ENCODE measurements at regions of chr2 and their contacts with region 1.

Region 1: DNA sequence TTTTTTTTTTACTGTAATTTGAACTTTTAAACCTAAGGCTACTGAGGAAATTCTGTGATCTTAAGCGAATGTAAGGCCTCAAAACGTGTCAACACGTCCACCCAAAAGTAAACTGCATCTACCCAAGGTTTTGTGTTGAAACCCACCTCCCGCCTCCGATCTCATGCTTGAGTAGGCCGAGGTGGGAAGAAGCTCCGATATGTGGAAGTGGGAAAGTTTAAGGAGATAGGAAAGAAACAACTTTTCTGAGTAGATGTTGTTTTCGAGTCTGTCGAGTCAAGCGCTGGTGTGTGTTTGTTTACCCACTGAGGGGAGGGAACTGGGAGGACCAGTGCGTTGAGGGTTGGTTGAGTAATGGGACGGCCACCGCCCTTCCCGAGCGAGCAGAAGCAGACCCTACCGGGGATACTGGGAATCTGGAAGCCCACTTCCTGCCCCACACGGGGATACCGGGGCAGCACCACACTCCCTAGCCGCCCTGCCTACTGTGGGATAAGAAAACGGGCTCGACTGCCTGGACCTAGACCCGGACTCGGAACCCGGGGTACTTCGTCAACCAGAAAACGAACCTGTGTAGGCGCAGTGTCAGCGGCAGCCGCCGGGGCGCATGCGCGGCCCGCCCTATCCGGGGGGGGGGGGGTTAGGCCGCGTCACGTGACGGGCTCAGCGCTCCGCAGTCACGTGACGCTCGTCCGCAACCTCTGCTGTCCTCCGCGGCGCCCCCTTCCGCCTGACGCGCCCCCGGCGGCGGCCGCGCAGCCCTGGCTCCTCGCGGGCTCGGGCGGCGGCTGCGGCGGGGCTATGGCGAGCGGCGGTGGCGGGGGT is at the start of gene RETREG2:
- DNase-seq: peak; percentile 88
- ATAC-seq: peak; percentile 43
- H3K4me3 Mint-ChIP-seq: peak within 1 kb of the TSS; percentile 97
- H3K27ac Mint-ChIP-seq: peak within 1 kb of the TSS; percentile 93
- H3K4me1 Mint-ChIP-seq: peaks cover 60% of the 10 kb centered on the region
- H3K27me3 Mint-ChIP-seq: no peaks in the 10 kb centered on the region
- total RNA-seq, gene RETREG2: 129 TPM

Region 2: DNA sequence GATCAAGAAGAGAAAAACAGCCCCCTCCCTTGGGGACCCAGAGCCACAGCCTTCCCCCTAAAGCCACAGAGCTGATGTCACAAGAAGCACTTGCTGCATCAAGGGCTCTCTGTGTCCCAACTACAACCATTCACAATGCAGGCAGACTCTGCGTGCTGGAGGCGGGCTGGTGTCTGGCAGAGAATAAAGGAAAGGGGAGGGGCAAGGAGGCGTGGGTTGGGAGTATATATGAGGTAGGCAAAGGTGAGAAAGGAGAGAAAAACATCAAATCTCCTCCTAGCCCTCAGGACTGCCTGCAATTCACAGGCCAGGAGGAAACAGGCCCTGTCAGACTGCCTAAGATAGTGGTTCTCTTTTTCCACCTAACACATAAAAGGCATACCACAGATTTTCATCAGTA is 68.3 kb before region 1 on chr2:
- POLR2A ChIA-PET with region 1: no interaction called
- DNase-seq: no peak
- ATAC-seq: peak; percentile 83
- H3K4me3 Mint-ChIP-seq: no peak overlapping the region
- H3K27ac Mint-ChIP-seq: no peak overlapping the region
- H3K4me1 Mint-ChIP-seq: peaks cover 17% of the 10 kb centered on the region
- H3K27me3 Mint-ChIP-seq: no peaks in the 10 kb centered on the region

Region 3: DNA sequence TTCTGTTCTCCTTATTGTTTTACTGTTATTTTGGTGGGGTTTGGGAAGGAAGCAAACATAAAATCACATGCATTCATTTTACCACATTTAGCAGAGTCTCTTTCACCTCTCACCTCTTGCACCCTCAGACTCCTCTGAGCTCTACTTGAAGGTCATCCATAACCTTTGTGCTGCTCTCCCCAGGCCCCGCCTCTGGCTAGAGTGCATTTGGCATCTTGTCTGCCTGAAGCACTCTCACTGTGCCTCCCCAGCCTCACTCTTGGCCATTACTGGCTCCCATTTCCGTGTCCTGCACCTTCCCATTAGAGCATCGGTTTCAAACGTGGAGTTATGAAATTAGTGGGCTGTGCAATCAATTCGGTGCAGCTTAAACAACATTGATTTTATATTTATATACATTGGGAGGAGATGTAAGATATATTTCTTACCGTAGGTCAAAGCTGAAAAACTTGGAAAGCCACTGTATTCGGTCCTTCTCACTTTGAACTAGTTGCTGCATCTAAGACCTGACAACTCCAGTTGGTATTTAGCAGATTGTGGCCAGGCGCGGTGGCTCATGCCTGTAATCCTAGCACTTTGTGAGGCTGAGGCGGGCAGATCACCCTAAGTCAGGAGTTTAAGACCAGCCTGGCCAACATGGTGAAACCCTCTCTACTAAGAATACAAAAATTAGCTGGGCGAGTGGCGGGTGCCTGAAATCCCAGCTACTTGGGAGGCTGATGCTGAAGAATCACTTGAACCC is 21.9 kb after region 1 on chr2:
- POLR2A ChIA-PET with region 1: interaction called, 73 read pairs
- DNase-seq: no peak
- ATAC-seq: peak; percentile 40
- H3K4me3 Mint-ChIP-seq: peak overlapping the region; percentile 55
- H3K27ac Mint-ChIP-seq: peak overlapping the region; percentile 71
- H3K4me1 Mint-ChIP-seq: peaks cover 18% of the 10 kb centered on the region
- H3K27me3 Mint-ChIP-seq: no peaks in the 10 kb centered on the region

Region 4: DNA sequence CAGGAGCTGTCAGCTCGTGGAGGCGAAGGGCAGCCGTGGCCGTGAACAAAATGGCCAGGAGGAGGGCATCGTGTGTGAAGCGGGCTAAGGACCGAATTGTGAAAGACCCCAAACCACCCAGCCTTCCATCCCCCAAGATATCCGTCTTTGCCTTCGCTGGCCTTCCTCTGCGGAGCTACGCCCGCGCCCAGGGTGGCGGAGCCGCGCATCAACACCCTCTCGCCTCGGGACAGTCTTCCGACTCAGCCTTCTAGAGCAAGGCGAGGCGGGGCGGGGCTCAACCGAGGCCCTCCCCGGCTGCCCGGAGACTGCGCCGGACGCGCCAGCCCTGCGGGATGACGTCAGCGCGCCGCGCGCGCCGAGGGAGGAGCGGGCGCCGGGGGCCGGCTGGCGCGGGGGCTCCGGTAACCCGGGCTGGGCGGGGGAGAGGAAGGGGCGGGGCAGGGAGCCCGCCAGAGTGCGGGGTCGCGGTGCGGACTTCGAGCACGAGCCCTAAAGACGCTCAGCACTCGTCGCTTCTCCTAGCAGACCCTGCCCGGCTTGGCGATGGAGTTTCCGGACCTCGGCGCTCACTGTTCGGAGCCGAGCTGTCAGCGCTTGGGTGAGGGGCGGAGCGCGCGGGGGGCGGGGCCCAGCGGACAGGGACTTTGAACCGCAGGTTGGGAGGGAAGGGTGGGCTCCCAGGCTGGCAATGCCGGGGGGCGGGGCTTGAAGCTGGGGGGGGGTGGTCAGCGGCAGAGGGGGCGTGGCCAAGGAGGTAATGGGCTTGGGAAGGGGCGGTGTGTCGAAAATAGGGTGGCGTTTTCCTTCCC is 28.9 kb after region 1 on chr2 and contains the start of gene ZFAND2B:
- POLR2A ChIA-PET with region 1: interaction called, 92 read pairs
- DNase-seq: peak; percentile 99
- ATAC-seq: peak; percentile 97
- H3K4me3 Mint-ChIP-seq: peak within 1 kb of the TSS; percentile 85
- H3K27ac Mint-ChIP-seq: peak within 1 kb of the TSS; percentile 93
- H3K4me1 Mint-ChIP-seq: peaks cover 47% of the 10 kb centered on the region
- H3K27me3 Mint-ChIP-seq: no peaks in the 10 kb centered on the region
- total RNA-seq, gene ZFAND2B: 68.1 to 69.8 TPM

Region 5: DNA sequence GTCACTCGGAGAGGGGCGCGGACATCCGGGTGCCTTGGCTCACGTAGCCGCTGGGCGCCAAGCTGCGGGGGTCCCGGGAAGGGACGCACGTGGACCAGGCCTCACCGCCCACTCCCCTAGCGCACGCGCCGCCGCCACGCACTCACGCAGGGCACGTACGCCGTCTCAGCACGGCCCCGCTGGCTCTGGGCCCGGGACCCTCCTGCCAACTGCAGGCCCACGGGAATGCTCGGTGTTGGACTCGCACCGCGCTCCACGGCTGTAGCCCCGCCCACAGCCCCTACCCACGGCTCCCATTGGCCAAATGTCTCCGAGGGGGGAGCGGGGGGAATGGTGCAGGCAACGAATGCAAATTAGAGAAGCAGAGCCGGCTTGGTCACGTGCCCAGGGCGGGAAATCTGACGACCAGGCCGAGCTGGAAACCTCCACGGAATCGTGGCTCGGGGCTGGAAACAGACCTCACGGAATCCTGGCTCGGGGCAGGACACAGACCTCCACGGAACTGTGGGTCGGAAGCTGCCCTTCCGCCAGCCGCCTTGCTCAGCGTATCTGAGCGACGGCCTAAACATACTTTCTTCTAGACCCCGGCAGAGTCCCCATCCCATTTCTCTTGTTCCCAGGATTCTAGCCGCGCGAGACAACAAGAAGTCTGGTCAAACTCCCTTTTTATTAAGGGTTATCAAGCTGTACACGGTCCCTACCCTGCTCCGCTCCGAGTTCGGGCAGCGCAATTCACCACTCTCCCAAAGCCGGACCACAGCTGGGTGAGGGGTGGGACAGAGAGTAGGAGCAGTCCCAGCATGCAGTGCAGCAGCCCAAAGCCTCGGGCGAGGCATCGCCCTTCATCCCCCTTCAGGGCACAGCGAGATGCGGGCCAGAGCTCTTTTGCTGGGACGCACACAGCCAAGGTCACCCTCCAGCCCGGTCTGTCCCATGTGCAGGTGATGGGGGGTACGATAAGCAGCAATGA is 41.3 kb after region 1 on chr2 and contains the start of gene ABCB6:
- POLR2A ChIA-PET with region 1: interaction called, 11 read pairs
- DNase-seq: peak; percentile 82
- ATAC-seq: peak; percentile 86
- H3K4me3 Mint-ChIP-seq: peak within 1 kb of the TSS; percentile 82
- H3K27ac Mint-ChIP-seq: peak within 1 kb of the TSS; percentile 65
- H3K4me1 Mint-ChIP-seq: peaks cover 15% of the 10 kb centered on the region
- H3K27me3 Mint-ChIP-seq: no peaks in the 10 kb centered on the region
- total RNA-seq, gene ABCB6: 13.1 to 14.3 TPM

Region 6: GRCh38 chr2:219253753-219254590 is 76.2 kb after region 1 on chr2 and contains the start of gene TUBA4A:
- POLR2A ChIA-PET with region 1: interaction called, 56 read pairs
- DNase-seq: peak; percentile 94
- ATAC-seq: peak; percentile 69
- H3K4me3 Mint-ChIP-seq: peak within 1 kb of the TSS; percentile 99
- H3K27ac Mint-ChIP-seq: peak within 1 kb of the TSS; percentile 90
- H3K4me1 Mint-ChIP-seq: peaks cover 40% of the 10 kb centered on the region
- H3K27me3 Mint-ChIP-seq: no peaks in the 10 kb centered on the region
- total RNA-seq, gene TUBA4A: 237 to 266 TPM

Region 7: DNA sequence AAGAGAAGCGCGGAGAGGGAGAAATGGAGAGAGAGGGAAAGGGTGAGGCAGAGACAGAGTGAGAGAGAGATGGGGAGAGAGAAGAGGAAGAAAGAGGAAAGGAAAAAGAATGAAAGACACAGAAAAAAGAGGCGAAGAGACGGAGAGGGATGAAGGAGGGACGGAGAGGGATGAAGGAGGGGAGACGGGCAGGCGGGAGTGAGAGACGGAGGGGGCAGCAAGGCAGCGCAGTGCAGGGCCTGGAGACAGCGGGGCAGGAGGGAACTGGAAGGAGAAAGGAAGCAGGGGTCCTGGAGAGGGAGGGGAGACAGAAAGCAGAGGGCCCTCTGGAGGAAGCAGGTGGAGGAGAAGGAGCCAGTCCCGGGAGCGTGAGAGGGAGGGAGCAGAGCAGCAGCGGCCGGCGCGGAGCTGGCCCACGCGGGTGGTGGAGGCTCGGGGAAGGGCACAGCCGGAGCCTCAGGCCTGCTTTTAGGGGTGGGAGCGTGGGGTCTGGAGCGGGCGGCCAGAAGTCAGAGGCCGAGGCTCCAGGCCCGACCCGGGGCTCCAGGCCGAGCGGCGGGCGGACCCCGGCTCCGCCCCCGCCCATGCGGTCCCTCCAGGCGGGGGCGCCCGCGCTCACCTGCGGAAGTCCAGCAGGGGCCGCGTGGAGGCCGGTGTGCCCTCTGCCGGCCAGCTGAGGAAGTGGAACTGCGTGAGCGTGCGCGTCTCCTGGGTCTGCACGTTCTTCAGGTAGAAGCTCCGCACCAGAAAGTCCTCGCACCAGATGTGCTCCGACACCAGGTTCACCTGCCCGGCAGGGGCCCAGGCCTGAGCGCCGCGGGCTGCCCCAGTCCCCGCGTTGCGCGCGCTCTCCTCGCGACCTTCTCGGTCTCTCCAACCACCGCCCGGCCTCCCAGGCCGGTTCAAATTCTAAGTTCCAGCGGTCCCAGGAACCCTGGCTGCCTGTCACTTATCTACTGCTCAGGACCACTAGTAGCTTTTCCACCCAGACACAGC is 116.9 kb after region 1 on chr2:
- POLR2A ChIA-PET with region 1: interaction called, 10 read pairs
- DNase-seq: peak; percentile 95
- ATAC-seq: peak; percentile 92
- H3K4me3 Mint-ChIP-seq: peak overlapping the region; percentile 84
- H3K27ac Mint-ChIP-seq: peak overlapping the region; percentile 70
- H3K4me1 Mint-ChIP-seq: peaks cover 23% of the 10 kb centered on the region
- H3K27me3 Mint-ChIP-seq: peaks cover 8% of the 10 kb centered on the region

Region 8: GRCh38 chr2:219684721-219685689 is 507.2 kb after region 1 on chr2:
- POLR2A ChIA-PET with region 1: no interaction called
- DNase-seq: peak; percentile 39
- ATAC-seq: peak; percentile 90
- H3K4me3 Mint-ChIP-seq: peak overlapping the region; percentile 84
- H3K27ac Mint-ChIP-seq: no peak overlapping the region
- H3K4me1 Mint-ChIP-seq: peaks cover 15% of the 10 kb centered on the region
- H3K27me3 Mint-ChIP-seq: peaks cover 17% of the 10 kb centered on the region